ENCODE measurements at regions of chr7 and their contacts with region 1.

Region 1: GRCh38 chr7:30396389-30396788 is 82.2 kb downstream of the NOD1 start:
- DNase-seq: no peak
- H3K4me3 ChIP-seq: no peak overlapping the region
- H3K27ac ChIP-seq: no peak overlapping the region
- H3K4me1 ChIP-seq: peaks cover 0 to 4% (median 2%) of the 10 kb centered on the region in 4 experiments; a peak in 2 of 7 replicates
- H3K27me3 ChIP-seq: no peaks in the 10 kb centered on the region
- CTCF ChIP-seq: peak in 2 of 3 experiments; percentile 21 to 26; a peak in 2 of 4 replicates
- EP300 ChIP-seq: no peak
- POLR2A ChIP-seq: no peak
- RAD21 ChIP-seq: peak; percentile 22 to 32

Region 2: GRCh38 chr7:30406664-30407425 is 10.5 kb after region 1 on chr7:
- CTCF ChIA-PET with region 1: interaction called, 10 read pairs
- POLR2A ChIA-PET with region 1: interaction called, 3 read pairs
- DNase-seq: peak in 1 of 2 experiments; percentile 34
- H3K4me3 ChIP-seq: no peak overlapping the region
- H3K27ac ChIP-seq: no peak overlapping the region
- H3K4me1 ChIP-seq: no peaks in the 10 kb centered on the region
- H3K27me3 ChIP-seq: no peaks in the 10 kb centered on the region
- CTCF ChIP-seq: no peak
- EP300 ChIP-seq: no peak
- POLR2A ChIP-seq: no peak
- RAD21 ChIP-seq: no peak